Activated CD8-positive, alpha-beta T cell treated with anti-CD3 and anti-CD28 coated beads, Interleukin-2, amount 10 ng/mL, durations not matched to agents 7 days and 5 days (primary cell): ENCODE measurements at regions of chr1 and their contacts with region 1.

Region 1: DNA sequence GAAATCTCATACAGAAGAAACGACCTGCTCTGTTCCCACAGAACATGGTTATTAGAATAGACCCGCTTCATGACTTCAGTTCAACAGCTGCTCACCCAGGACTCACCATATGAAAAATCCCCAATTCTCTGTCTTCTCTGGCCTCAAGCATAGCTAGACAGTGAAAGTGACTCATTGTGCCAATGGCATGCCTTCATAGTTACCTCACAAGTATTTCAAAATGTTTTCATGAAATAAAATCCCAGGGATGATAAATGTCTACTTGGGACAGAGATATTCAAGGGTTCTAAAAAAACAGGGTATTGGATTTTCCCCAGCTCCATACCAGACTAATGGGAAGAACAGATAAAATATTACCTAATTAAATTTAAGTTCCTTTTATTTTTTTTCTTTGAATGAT is 82.3 kb downstream of the NOTCH2 start:
- DNase-seq: no peak
- ATAC-seq: peak; percentile 26
- H3K4me3 Mint-ChIP-seq: peak overlapping the region; percentile 60
- H3K27ac Mint-ChIP-seq: peak overlapping the region; percentile 88
- H3K4me1 Mint-ChIP-seq: peaks cover 47% of the 10 kb centered on the region
- H3K27me3 Mint-ChIP-seq: no peaks in the 10 kb centered on the region

Region 2: GRCh38 chr1:119948342-119949214 is 38.5 kb before region 1 on chr1:
- CTCF ChIA-PET with region 1: interaction called, 12 read pairs
- POLR2A ChIA-PET with region 1: no interaction called
- DNase-seq: peak; percentile 85
- ATAC-seq: peak; percentile 78
- H3K4me3 Mint-ChIP-seq: no peak overlapping the region
- H3K27ac Mint-ChIP-seq: peak overlapping the region; percentile 43
- H3K4me1 Mint-ChIP-seq: peaks cover 7% of the 10 kb centered on the region
- H3K27me3 Mint-ChIP-seq: no peaks in the 10 kb centered on the region